Breast epithelium (tissue), 4 donors: ENCODE measurements at regions of chr12 and their contacts with region 1.

Region 1: GRCh38 chr12:53219968-53220800 is 11.8 kb downstream of the RARG start:
- DNase-seq: peak in 1 of 2 donors; percentile 61
- H3K4me3 ChIP-seq: peak overlapping the region; percentile 58 to 77 (median 77)
- H3K27ac ChIP-seq: peak overlapping the region; percentile 99 to 100
- H3K4me1 ChIP-seq: peaks cover 30 to 53% of the 10 kb centered on the region in 2 donors
- H3K27me3 ChIP-seq: no peaks in the 10 kb centered on the region
- CTCF ChIP-seq: no peak
- POLR2A ChIP-seq: no peak

Region 2: DNA sequence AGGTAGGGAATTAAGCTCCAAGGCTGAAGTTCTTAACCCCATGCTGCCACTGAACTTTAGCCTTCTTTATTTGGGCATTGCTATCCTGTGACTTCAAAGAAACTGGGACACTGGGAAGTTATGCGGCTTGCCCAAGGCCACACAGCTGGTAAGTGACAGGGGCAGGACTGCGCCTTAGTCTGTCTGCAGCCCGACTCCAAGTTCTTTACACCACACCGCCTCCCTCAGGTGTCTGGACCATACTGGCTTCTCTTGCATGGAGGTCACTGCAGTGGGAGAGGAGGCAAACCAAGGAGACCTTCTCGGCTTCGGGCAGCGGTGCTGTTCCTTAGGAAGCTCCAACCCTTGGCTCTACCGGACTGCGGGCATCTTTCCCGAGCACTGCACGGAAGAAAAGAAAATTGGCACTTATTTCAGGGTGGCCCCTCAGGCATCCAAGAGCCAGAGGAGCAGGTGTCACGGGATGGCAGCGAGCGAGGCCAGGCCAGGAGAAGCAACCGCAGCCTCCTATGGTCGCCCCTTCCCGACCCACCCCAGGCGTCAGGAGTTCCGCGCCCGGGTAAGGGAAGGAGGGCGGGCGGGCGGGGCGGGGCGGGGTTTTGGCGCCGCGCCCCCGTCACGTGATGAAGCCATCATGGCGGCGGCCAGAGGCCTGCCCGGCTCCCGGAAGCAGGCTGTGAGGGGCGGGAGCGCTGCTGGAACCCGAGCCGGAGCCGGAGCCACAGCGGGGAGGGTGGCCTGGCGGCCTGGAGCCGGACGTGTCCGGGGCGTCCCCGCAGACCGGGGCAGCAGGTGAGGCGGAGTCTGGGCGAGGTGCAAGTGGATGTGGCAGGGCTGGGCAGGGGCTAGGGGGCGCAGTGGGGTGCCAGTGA is 31.5 kb after region 1 on chr12:
- intact Hi-C with region 1: loop called (anchors 5 kb)
- DNase-seq: peak; percentile 76 to 86
- H3K4me3 ChIP-seq: peak overlapping the region; percentile 76 to 97 (median 88)
- H3K27ac ChIP-seq: peak overlapping the region; percentile 84 to 97
- H3K4me1 ChIP-seq: peaks cover 0 to 11% of the 10 kb centered on the region in 2 donors
- H3K27me3 ChIP-seq: no peaks in the 10 kb centered on the region
- CTCF ChIP-seq: peak in 2 of 3 donors; percentile 29 to 36
- POLR2A ChIP-seq: no peak